Naive thymus-derived CD8-positive, alpha-beta T cell (primary cell): ENCODE measurements at regions of chr1 and their contacts with region 1.

Region 1: DNA sequence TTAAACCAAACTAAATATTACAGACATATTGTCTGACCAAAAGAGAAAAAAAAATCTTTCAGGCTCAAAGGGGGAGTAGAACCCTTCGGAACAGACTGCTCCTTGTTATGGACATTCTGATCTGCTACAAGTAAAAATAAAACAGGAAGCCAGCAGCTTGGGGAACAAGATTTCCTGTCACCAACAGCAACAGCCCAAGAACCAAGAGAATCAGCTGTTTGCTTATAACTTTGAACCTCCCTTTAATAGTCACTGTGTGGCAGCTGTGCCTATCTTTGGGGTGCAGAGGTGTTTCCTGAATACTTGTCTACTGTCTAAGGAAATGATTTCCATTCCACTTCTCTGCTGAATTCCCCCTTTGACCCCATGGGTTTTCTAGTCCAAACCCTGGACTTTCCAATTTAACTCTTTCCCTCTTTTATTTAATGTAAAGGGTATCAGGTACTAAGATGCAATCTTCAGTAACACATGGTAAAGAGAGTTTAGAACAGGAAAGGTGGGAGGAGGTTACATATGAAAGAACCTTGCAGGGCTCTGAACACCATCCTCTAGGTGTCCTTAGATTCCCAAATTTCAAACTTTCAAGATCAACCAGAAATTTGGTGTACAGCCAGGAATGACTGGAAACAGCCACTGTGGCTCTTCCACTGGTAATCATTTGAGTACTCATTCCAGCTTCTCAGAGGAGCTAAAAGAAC is 38.6 kb downstream of the GPR3 start:
- DNase-seq: peak in 6 of 10 donors; percentile 30 to 68 (median 42)
- ATAC-seq: peak; percentile 74 to 85
- H3K4me3 Mint-ChIP-seq: peak overlapping the region; percentile 29 to 91 (median 77)
- H3K27ac Mint-ChIP-seq: peak overlapping the region; percentile 40 to 96 (median 90)
- H3K4me1 Mint-ChIP-seq: peaks cover 42 to 95% (median 88%) of the 10 kb centered on the region in 4 donors
- H3K27me3 Mint-ChIP-seq: no peaks in the 10 kb centered on the region

Region 2: GRCh38 chr1:27365372-27366112 is 65.5 kb before region 1 on chr1:
- POLR2A ChIA-PET with region 1: no interaction called
- DNase-seq: peak; percentile 29 to 84 (median 72)
- ATAC-seq: peak; percentile 66 to 67
- H3K4me3 Mint-ChIP-seq: peak overlapping the region; percentile 81 to 92 (median 86)
- H3K27ac Mint-ChIP-seq: peak overlapping the region in 9 of 10 donors; percentile 44 to 92 (median 73)
- H3K4me1 Mint-ChIP-seq: peaks cover 14 to 55% (median 43%) of the 10 kb centered on the region in 4 donors
- H3K27me3 Mint-ChIP-seq: no peaks in the 10 kb centered on the region

Region 3: DNA sequence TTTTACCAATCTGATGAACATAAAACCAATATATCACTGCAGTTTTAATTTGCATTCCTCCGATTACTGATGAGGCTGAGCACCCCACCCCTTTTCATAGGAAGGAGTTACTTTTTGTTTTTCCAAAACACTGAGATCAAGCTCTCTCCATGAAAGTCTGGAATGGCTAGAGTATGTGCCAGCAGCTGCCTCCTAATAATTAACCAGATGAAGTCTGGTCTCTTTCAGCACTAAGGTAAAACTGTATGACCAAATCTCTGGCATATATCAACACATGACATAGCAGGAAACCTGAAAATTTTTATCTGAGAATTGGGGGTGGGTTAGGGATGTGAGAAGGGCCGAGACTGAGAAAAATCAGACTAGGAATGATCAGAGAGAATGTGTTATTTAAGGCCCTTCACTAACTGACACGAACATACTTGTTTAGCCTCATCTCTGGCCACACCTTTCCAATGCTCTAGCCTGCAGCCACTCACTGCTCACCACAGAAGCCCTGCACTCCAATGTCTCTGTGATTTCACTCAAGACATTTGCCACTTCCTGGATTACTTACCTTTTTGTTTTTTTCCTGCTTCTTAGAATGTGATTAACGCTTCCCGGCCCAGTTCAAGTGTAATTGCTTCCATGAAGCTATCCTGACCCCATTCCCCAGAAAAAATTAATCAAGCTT is 24.2 kb after region 1 on chr1:
- POLR2A ChIA-PET with region 1: interaction called, 10 read pairs
- DNase-seq: peak in 5 of 10 donors; percentile 6 to 47 (median 26)
- ATAC-seq: peak; percentile 78 to 91
- H3K4me3 Mint-ChIP-seq: peak overlapping the region; percentile 57 to 77 (median 68)
- H3K27ac Mint-ChIP-seq: peak overlapping the region; percentile 22 to 94 (median 82)
- H3K4me1 Mint-ChIP-seq: peaks cover 18 to 65% (median 56%) of the 10 kb centered on the region in 4 donors
- H3K27me3 Mint-ChIP-seq: no peaks in the 10 kb centered on the region

Region 4: GRCh38 chr1:27536767-27537166 is 105.7 kb after region 1 on chr1:
- POLR2A ChIA-PET with region 1: no interaction called
- DNase-seq: no peak
- ATAC-seq: no peak
- H3K4me3 Mint-ChIP-seq: no peak overlapping the region
- H3K27ac Mint-ChIP-seq: peak overlapping the region in 2 of 10 donors; percentile 18 to 77
- H3K4me1 Mint-ChIP-seq: peaks cover 18 to 31% (median 22%) of the 10 kb centered on the region in 4 donors
- H3K27me3 Mint-ChIP-seq: no peaks in the 10 kb centered on the region